HEK293 (cell line): ENCODE measurements at regions of chrX and their contacts with region 1.

Region 1: DNA sequence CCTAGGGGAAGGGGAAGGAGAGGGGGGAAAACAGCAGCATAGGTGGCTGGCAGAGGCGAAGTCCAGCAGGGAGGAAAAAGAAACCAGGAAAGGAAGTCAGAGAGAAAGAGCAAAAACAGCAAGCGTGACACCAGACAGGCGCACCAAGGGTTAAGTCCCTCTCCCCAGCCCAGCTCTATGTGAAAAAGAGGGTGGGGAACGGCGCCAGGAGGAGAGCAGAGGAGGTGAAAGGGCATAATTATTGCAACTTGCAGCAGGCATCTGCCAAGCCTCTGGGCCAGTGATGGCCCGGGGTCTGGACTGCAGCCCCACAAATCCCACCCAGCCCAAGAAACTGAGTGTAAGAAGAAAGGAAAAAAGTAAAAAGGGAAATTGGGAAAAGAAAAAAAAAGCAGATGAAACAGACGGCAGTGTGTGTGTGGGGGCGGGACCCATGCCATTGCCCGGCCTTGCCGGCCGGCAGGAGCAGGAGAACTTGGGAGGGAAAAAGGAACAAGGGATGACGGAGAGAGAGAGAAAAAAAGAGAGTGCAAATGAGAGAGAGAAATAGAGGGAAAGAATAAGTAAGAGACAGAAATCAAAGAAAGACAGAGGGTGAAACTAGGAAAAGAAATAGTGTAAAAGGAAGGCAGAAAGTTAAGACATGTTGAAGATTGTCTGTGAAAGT is 14.1 kb upstream of the RHOXF2 start:
- H3K4me3 ChIP-seq: no peak overlapping the region
- H3K27ac ChIP-seq: no peak overlapping the region
- H3K4me1 ChIP-seq: no peaks in the 10 kb centered on the region
- CTCF ChIP-seq: no peak

Region 2: GRCh38 chrX:120125444-120125843 is 18.9 kb before region 1 on chrX:
- CTCF ChIA-PET with region 1: interaction called, 10 read pairs
- POLR2A ChIA-PET with region 1: no interaction called
- H3K4me3 ChIP-seq: no peak overlapping the region
- H3K27ac ChIP-seq: no peak overlapping the region
- H3K4me1 ChIP-seq: no peaks in the 10 kb centered on the region
- CTCF ChIP-seq: no peak